ENCODE measurements at regions of chr6 and their contacts with region 1.

Region 1: GRCh38 chr6:24991810-24992467 is 56.2 kb upstream of the RIPOR2 start:
- DNase-seq: peak; percentile 88
- ATAC-seq: peak; percentile 87
- H3K4me3 ChIP-seq: peak overlapping the region in 3 of 5 experiments; percentile 13 to 27 (median 17)
- H3K4me3 Mint-ChIP-seq: peak overlapping the region; percentile 58
- H3K27ac ChIP-seq: peak overlapping the region; percentile 48 to 83
- H3K27ac Mint-ChIP-seq: peak overlapping the region; percentile 90
- H3K4me1 ChIP-seq: peaks cover 53 to 63% of the 10 kb centered on the region in 2 donors
- H3K4me1 Mint-ChIP-seq: peaks cover 75% of the 10 kb centered on the region
- H3K27me3 ChIP-seq: no peaks in the 10 kb centered on the region
- H3K27me3 Mint-ChIP-seq: no peaks in the 10 kb centered on the region
- CTCF ChIP-seq: peak; percentile 86

Region 2: DNA sequence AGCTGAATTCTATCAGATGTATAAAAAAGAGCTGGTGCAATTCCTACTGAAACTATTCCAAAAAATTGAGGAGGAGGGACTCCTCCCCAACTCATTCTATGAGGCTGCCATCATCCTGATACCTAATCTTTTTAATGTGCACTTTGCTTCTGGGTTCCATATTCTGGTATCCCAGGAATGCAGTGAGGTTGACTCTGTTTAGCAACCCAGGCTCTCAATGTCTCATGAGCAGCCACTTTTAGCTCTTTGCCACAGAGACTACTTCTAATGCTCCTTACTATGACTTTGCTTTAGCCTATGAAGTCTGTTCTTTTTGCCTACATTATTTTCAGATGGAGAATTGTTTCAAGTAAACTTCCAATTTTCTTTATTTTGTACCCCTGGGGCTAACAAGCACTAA is 1051.5 kb before region 1 on chr6:
- CTCF ChIA-PET with region 1: no interaction called
- POLR2A ChIA-PET with region 1: no interaction called
- intact Hi-C with region 1: no loop called
- DNase-seq: no peak
- ATAC-seq: no peak
- H3K4me3 ChIP-seq: no peak overlapping the region
- H3K4me3 Mint-ChIP-seq: no peak overlapping the region
- H3K27ac ChIP-seq: no peak overlapping the region
- H3K27ac Mint-ChIP-seq: no peak overlapping the region
- H3K4me1 ChIP-seq: no peaks in the 10 kb centered on the region
- H3K4me1 Mint-ChIP-seq: no peaks in the 10 kb centered on the region
- H3K27me3 ChIP-seq: no peaks in the 10 kb centered on the region
- H3K27me3 Mint-ChIP-seq: no peaks in the 10 kb centered on the region
- CTCF ChIP-seq: no peak

Region 3: GRCh38 chr6:24848461-24848860 is 143.5 kb before region 1 on chr6:
- CTCF ChIA-PET with region 1: interaction called, 12 read pairs
- POLR2A ChIA-PET with region 1: no interaction called
- intact Hi-C with region 1: no loop called
- DNase-seq: no peak
- ATAC-seq: no peak
- H3K4me3 ChIP-seq: no peak overlapping the region
- H3K4me3 Mint-ChIP-seq: no peak overlapping the region
- H3K27ac ChIP-seq: no peak overlapping the region
- H3K27ac Mint-ChIP-seq: peak overlapping the region; percentile 18
- H3K4me1 ChIP-seq: no peaks in the 10 kb centered on the region
- H3K4me1 Mint-ChIP-seq: peaks cover 12% of the 10 kb centered on the region
- H3K27me3 ChIP-seq: no peaks in the 10 kb centered on the region
- H3K27me3 Mint-ChIP-seq: no peaks in the 10 kb centered on the region
- CTCF ChIP-seq: no peak

Region 4: GRCh38 chr6:24891004-24891403 is 100.9 kb before region 1 on chr6:
- CTCF ChIA-PET with region 1: interaction called, 39 read pairs
- POLR2A ChIA-PET with region 1: interaction called, 4 read pairs
- intact Hi-C with region 1: no loop called
- DNase-seq: no peak
- ATAC-seq: peak; percentile 28
- H3K4me3 ChIP-seq: no peak overlapping the region
- H3K4me3 Mint-ChIP-seq: peak overlapping the region; percentile 58
- H3K27ac ChIP-seq: peak overlapping the region in 1 of 2 donors; percentile 53
- H3K27ac Mint-ChIP-seq: peak overlapping the region; percentile 54
- H3K4me1 ChIP-seq: peaks cover 82 to 83% of the 10 kb centered on the region in 2 donors
- H3K4me1 Mint-ChIP-seq: peaks cover 88% of the 10 kb centered on the region
- H3K27me3 ChIP-seq: no peaks in the 10 kb centered on the region
- H3K27me3 Mint-ChIP-seq: no peaks in the 10 kb centered on the region
- CTCF ChIP-seq: no peak

Region 5: GRCh38 chr6:24919004-24919892 is 72.7 kb before region 1 on chr6:
- CTCF ChIA-PET with region 1: interaction called, 465 read pairs
- POLR2A ChIA-PET with region 1: interaction called, 5 read pairs
- intact Hi-C with region 1: no loop called
- DNase-seq: peak; percentile 39
- ATAC-seq: peak; percentile 70
- H3K4me3 ChIP-seq: peak overlapping the region in 4 of 5 experiments; percentile 2 to 39 (median 16)
- H3K4me3 Mint-ChIP-seq: peak overlapping the region; percentile 84
- H3K27ac ChIP-seq: peak overlapping the region; percentile 36 to 68
- H3K27ac Mint-ChIP-seq: peak overlapping the region; percentile 92
- H3K4me1 ChIP-seq: peaks cover 95 to 99% of the 10 kb centered on the region in 2 donors
- H3K4me1 Mint-ChIP-seq: peaks cover 91% of the 10 kb centered on the region
- H3K27me3 ChIP-seq: no peaks in the 10 kb centered on the region
- H3K27me3 Mint-ChIP-seq: no peaks in the 10 kb centered on the region
- CTCF ChIP-seq: no peak

Region 6: GRCh38 chr6:24960991-24961475 is 30.9 kb before region 1 on chr6:
- CTCF ChIA-PET with region 1: interaction called, 26 read pairs
- POLR2A ChIA-PET with region 1: interaction called, 4 read pairs
- intact Hi-C with region 1: no loop called
- DNase-seq: no peak
- ATAC-seq: no peak
- H3K4me3 ChIP-seq: peak overlapping the region in 1 of 5 experiments; percentile 13
- H3K4me3 Mint-ChIP-seq: peak overlapping the region; percentile 68
- H3K27ac ChIP-seq: peak overlapping the region in 1 of 2 donors; percentile 45
- H3K27ac Mint-ChIP-seq: peak overlapping the region; percentile 88
- H3K4me1 ChIP-seq: peaks cover 63 to 69% of the 10 kb centered on the region in 2 donors
- H3K4me1 Mint-ChIP-seq: peaks cover 74% of the 10 kb centered on the region
- H3K27me3 ChIP-seq: no peaks in the 10 kb centered on the region
- H3K27me3 Mint-ChIP-seq: no peaks in the 10 kb centered on the region
- CTCF ChIP-seq: no peak

Region 7: GRCh38 chr6:24980507-24981387 is 11.2 kb before region 1 on chr6:
- CTCF ChIA-PET with region 1: interaction called, 36 read pairs
- POLR2A ChIA-PET with region 1: interaction called, 6 read pairs
- intact Hi-C with region 1: loop called (anchors 2 kb)
- DNase-seq: no peak
- ATAC-seq: no peak
- H3K4me3 ChIP-seq: no peak overlapping the region
- H3K4me3 Mint-ChIP-seq: no peak overlapping the region
- H3K27ac ChIP-seq: no peak overlapping the region
- H3K27ac Mint-ChIP-seq: peak overlapping the region; percentile 71
- H3K4me1 ChIP-seq: peaks cover 13 to 25% of the 10 kb centered on the region in 2 donors
- H3K4me1 Mint-ChIP-seq: peaks cover 54% of the 10 kb centered on the region
- H3K27me3 ChIP-seq: no peaks in the 10 kb centered on the region
- H3K27me3 Mint-ChIP-seq: no peaks in the 10 kb centered on the region
- CTCF ChIP-seq: no peak

Region 8: GRCh38 chr6:25070547-25071366 is 78.8 kb after region 1 on chr6:
- CTCF ChIA-PET with region 1: interaction called, 24 read pairs
- POLR2A ChIA-PET with region 1: no interaction called
- intact Hi-C with region 1: loop called (anchors 2 kb)
- DNase-seq: peak; percentile 93
- ATAC-seq: peak; percentile 97
- H3K4me3 ChIP-seq: peak overlapping the region in 4 of 5 experiments; percentile 31 to 72 (median 48)
- H3K4me3 Mint-ChIP-seq: peak overlapping the region; percentile 86
- H3K27ac ChIP-seq: peak overlapping the region; percentile 74 to 80
- H3K27ac Mint-ChIP-seq: peak overlapping the region; percentile 97
- H3K4me1 ChIP-seq: peaks cover 0 to 4% of the 10 kb centered on the region in 2 donors
- H3K4me1 Mint-ChIP-seq: peaks cover 9% of the 10 kb centered on the region
- H3K27me3 ChIP-seq: no peaks in the 10 kb centered on the region
- H3K27me3 Mint-ChIP-seq: no peaks in the 10 kb centered on the region
- CTCF ChIP-seq: peak; percentile 95

Measured in B cell (primary cell).